ENCODE measurements at regions of chr9 and their contacts with region 1.

Region 1: DNA sequence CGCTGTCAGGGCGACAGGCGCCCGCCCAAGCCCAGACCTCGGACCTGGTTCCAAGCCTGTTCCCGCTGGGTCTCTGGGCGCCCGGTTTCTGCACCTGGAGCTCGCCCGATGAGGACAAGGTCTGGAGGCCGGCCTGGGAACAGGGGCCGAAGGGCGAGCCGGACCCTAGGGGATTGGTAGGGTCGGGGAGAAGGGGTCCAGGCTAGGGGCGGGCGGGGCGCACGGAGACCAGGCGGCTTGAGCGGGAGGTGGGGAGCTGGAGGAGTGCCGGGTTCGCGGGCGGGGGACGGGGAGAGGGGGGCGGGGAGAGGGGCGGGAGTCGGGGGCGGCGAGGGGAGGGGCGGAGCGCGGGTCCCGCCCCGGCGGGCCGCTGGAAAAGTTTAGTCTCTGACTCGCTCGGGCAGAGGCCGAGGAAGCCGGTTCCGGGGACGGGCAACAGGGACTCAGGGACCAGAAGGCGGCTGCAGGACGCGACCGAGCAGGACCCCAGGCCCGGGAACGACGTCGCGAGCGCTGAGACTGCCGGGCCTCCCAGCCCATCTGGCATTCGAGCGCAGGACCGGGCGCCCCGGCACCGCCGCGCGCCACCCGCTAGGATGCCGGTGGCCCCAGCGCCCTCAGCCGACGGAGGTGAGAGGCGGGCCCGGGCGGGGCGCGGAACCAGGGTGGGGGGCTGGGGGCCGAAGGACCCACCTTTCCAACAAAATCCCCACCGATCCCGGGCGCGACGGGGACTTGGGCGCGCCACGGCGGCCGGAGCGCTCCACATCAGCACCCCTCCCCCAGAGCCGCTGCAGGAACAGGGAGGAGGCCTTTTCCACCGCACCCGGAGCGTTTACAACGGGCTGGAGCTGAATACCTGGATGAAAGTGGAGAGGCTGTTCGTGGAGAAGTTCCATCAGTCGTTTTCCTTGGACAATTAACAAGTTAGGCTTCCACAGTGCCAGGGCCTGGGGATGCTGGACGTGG is at the start of gene S1PR3:
- DNase-seq: peak; percentile 76
- ATAC-seq: peak; percentile 87
- total RNA-seq, gene S1PR3: 27.5 TPM

Region 2: GRCh38 chr9:88781628-88782391 is 209.5 kb before region 1 on chr9:
- intact Hi-C with region 1: loop called (anchors 2 kb)
- DNase-seq: no peak
- ATAC-seq: peak; percentile 79

Region 3: DNA sequence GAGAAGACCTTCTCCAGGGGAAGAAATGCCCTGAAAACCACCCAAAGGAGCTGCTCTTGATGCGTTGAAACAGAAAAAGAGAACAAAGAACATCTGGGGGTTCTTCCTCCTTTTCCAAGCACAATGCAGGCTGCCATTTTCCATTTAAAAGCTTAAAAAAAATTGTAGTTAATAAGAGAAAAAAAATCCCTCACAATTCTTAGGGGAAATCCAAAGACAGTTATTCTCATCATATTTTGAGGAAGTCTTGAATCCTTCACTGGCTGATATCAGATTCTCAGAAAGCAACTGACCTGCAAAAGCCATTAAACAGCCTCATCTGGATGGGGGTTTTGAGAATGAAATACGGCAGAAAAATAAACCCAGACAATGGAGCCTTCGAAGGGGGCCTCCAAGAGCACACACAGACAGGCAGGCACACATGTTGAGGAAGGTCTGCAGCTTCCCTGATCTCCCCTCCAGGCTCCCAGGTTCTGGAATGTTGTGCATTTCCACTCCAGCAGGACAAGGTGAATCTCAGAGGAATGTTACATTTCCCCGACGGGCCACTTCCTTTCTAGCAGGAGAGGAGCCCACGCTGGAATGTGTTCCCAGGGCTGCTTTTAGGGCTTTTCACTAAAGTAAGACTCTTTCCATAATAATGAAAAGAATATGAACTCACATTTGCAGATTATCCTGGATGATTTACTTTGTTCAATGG is 159.5 kb before region 1 on chr9:
- intact Hi-C with region 1: loop called (anchors 5 kb)
- DNase-seq: no peak
- ATAC-seq: no peak

Region 4: DNA sequence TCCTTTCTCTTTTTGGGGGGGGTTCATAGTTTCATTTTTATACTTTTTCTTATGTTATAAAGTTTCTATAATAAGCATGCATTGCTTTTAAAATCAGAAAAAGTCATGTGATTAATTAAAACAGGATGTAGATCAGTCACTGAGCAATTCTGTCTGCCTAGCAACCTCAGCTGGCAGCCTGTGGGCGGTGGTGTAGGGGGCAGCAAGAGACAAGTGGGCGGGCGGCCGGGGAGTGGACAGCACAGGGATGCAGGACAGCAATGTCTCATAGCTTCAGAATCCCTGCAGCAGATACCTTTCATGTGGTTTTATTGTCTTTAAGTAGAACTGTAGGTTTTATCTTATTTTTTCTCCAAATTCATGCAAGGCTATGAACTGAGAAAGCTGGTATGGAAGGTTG is 102.0 kb before region 1 on chr9:
- intact Hi-C with region 1: loop called (anchors 5 kb)
- DNase-seq: no peak
- ATAC-seq: no peak

Region 5: GRCh38 chr9:88905506-88905905 is 85.8 kb before region 1 on chr9:
- intact Hi-C with region 1: no loop called
- DNase-seq: no peak
- ATAC-seq: no peak

Measured in Right ventricle myocardium inferior (tissue), 1 donor.